Mammary epithelial cell (primary cell): ENCODE measurements at regions of chr2 and their contacts with region 1.

Region 1: GRCh38 chr2:88669371-88670214 is 21.9 kb upstream of the RPIA start:
- DNase-seq: peak; percentile 60
- H3K4me3 ChIP-seq: no peak overlapping the region
- H3K27ac ChIP-seq: no peak overlapping the region
- H3K4me1 ChIP-seq: peaks cover 5% of the 10 kb centered on the region
- H3K27me3 ChIP-seq: no peaks in the 10 kb centered on the region
- CTCF ChIP-seq: peak; percentile 80 to 91

Region 2: DNA sequence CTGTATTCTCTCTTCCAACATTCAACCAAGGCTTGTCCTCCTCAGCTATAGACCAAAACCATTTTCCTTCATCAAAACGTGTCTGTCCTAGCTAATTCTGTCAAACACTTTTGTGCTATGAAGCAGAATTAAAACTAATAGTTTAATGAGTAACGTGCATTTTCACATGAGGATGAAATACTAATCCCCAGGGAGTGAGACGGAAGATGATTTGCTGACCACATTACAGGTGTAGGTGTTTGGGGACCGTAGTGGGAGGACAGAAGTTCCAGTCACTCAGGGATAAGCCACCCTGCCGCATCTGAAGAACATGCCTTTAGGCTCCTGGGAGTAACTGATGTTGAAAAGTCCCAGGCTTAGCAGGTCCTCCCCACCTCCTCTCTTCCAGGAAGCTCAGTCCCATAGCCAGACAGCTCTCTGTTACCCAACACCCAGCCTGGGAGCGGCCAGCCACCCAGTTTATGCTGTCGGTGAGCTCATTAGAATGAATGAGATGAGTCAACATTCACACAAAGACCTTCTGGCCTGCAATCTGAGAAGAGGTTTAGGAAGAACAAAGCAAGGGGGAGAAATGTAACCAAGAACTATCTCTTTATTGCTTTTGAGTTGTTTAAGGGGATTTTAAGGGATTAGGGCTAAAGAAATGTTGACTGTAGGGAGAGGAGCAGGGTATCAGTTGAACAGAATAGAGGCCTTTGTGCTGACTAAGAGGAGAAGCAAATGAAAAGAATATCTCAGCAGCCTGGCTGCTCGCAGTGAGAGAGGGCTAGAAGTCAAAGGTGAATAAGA is 339.6 kb before region 1 on chr2:
- CTCF ChIA-PET with region 1: no interaction called
- dilution Hi-C with region 1: no loop called
- in situ Hi-C with region 1: no loop called
- intact Hi-C with region 1: no loop called
- DNase-seq: peak; percentile 81
- H3K4me3 ChIP-seq: no peak overlapping the region
- H3K27ac ChIP-seq: no peak overlapping the region
- H3K4me1 ChIP-seq: peaks cover 3% of the 10 kb centered on the region
- H3K27me3 ChIP-seq: peaks cover 3% of the 10 kb centered on the region
- CTCF ChIP-seq: no peak

Region 3: DNA sequence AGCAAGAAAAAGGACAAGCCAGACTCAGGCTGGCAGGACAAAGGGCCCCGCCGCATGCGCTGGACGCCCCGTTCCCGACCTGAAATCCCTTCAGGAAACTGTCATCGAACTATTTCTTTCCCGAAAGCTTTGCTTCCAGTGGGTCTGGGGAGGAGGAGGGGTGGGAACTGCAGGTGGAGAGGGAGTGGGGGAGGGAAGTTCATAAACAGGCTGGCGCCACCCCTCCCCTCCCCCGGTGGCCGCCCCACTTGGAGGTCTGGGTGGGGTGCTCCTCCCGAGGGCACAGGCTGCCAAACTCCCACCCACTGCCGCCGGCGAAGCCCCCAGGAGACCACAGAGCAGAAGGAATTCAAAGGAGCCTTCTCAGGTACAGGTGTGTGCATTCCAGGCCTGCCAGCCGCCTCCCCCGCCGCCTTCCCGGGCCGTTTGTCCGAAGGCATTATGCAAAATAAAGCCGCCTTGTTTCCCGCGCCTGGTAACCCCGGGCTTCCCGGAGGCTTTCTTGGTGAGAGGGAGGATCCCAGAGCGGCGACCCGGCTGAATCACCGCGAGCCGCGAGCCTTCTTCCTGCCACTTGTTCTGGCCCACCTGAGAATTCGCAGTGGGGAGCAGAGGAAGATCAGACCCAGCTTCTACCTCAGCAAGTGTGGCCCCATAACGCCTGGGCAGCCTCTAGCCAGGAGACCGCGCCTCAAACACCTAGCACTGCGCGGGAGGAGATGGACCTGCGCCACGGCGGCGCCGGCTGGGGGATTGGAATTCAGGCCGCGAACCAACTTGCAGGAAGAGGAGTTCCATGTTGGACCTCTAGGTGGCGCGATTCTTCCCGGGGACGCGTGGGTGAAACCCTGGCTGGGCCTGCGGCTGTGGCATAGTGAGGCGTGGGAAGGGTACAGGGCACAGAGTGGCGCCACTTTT is 319.0 kb before region 1 on chr2:
- CTCF ChIA-PET with region 1: no interaction called
- dilution Hi-C with region 1: no loop called
- in situ Hi-C with region 1: no loop called
- intact Hi-C with region 1: loop called (anchors 1 kb)
- DNase-seq: peak; percentile 47
- H3K4me3 ChIP-seq: peak overlapping the region; percentile 25 to 48 (median 39)
- H3K27ac ChIP-seq: no peak overlapping the region
- H3K4me1 ChIP-seq: peaks cover 9% of the 10 kb centered on the region
- H3K27me3 ChIP-seq: no peaks in the 10 kb centered on the region
- CTCF ChIP-seq: peak; percentile 78 to 90

Region 4: DNA sequence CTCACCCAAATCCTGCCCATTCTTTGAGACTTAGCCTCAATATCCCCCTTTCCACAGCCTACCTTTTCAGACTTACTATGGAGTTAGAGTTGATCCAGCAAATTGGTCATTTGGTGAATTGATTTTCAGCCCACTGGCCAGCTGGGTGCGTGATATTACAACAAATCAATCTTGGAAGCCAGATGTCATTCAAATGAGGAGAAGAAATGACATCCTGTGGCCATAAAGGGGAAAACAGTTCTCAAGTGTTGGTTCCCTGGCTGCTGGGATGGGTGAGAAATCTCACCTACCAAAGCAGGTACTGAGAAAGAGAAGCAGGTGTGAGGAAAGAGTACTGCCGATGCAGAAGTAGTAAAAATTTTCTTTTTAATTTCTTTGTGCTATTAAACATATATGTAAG is 180.4 kb before region 1 on chr2:
- CTCF ChIA-PET with region 1: no interaction called
- dilution Hi-C with region 1: no loop called
- in situ Hi-C with region 1: no loop called
- intact Hi-C with region 1: loop called (anchors 2 kb)
- DNase-seq: no peak
- H3K4me3 ChIP-seq: no peak overlapping the region
- H3K27ac ChIP-seq: no peak overlapping the region
- H3K4me1 ChIP-seq: peaks cover 11% of the 10 kb centered on the region
- H3K27me3 ChIP-seq: no peaks in the 10 kb centered on the region
- CTCF ChIP-seq: peak in 1 of 2 donors; percentile 37

Region 5: GRCh38 chr2:88590998-88591613 is 78.5 kb before region 1 on chr2:
- CTCF ChIA-PET with region 1: no interaction called
- dilution Hi-C with region 1: no loop called
- in situ Hi-C with region 1: loop called (anchors 5 kb)
- intact Hi-C with region 1: loop called (anchors 1 kb)
- DNase-seq: peak; percentile 50
- H3K4me3 ChIP-seq: no peak overlapping the region
- H3K27ac ChIP-seq: no peak overlapping the region
- H3K4me1 ChIP-seq: no peaks in the 10 kb centered on the region
- H3K27me3 ChIP-seq: no peaks in the 10 kb centered on the region
- CTCF ChIP-seq: peak; percentile 73 to 81

Region 6: GRCh38 chr2:88606371-88607030 is 63.1 kb before region 1 on chr2:
- CTCF ChIA-PET with region 1: no interaction called
- dilution Hi-C with region 1: no loop called
- in situ Hi-C with region 1: no loop called
- intact Hi-C with region 1: no loop called
- DNase-seq: no peak
- H3K4me3 ChIP-seq: no peak overlapping the region
- H3K27ac ChIP-seq: no peak overlapping the region
- H3K4me1 ChIP-seq: peaks cover 23% of the 10 kb centered on the region
- H3K27me3 ChIP-seq: no peaks in the 10 kb centered on the region
- CTCF ChIP-seq: no peak

Region 7: GRCh38 chr2:88654714-88655113 is 14.9 kb before region 1 on chr2:
- CTCF ChIA-PET with region 1: interaction called, 10 read pairs
- dilution Hi-C with region 1: no loop called
- in situ Hi-C with region 1: no loop called
- intact Hi-C with region 1: no loop called
- DNase-seq: peak; percentile 41
- H3K4me3 ChIP-seq: no peak overlapping the region
- H3K27ac ChIP-seq: no peak overlapping the region
- H3K4me1 ChIP-seq: peaks cover 13% of the 10 kb centered on the region
- H3K27me3 ChIP-seq: no peaks in the 10 kb centered on the region
- CTCF ChIP-seq: no peak